Left lung (tissue), 14 donors: ENCODE measurements at regions of chr14 and their contacts with region 1.

Region 1: DNA sequence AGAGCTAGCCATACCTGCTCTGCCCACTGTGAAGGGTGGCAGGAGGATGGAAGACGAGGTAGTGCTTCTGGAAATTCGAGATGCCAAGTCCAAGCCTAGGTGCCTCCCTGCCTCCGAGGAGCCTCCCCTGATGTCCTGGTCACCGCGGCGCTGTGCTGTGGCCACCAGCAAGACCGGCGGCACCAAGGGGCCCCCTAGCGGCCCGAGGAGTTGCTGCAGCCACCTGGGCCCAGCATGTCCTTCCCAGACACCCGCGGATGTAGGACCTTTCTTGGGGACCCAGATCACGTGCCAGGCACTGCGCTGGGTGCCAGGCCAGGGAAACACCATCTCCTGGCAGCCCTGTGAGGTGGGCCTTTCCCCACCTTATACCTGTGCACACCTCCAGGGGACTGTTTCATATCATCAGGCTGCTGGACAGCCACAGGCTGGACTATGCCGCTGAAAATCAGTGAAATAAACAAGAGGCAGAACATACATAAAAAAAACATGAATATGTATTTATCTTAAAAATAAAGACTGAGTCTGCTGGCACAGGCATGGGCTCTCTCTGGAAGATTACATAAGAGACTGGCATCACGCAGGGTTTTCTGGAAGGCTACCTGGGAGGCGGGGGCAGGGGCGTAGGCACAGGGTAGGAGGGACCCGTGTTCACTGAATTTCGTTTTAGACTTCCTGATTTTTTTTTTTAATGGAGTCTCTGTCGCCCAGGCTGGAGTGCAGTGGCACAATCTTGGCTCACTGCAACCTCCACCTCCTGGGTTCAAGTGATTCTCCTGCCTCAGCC is 15.9 kb upstream of the HHIPL1 start:
- DNase-seq: peak; percentile 61 to 91 (median 73)
- ATAC-seq: peak; percentile 99
- H3K4me3 ChIP-seq: no peak overlapping the region
- H3K27ac ChIP-seq: no peak overlapping the region
- H3K4me1 ChIP-seq: peaks cover 0 to 4% of the 10 kb centered on the region in 2 donors
- H3K27me3 ChIP-seq: no peaks in the 10 kb centered on the region
- CTCF ChIP-seq: peak; percentile 97 to 98

Region 2: DNA sequence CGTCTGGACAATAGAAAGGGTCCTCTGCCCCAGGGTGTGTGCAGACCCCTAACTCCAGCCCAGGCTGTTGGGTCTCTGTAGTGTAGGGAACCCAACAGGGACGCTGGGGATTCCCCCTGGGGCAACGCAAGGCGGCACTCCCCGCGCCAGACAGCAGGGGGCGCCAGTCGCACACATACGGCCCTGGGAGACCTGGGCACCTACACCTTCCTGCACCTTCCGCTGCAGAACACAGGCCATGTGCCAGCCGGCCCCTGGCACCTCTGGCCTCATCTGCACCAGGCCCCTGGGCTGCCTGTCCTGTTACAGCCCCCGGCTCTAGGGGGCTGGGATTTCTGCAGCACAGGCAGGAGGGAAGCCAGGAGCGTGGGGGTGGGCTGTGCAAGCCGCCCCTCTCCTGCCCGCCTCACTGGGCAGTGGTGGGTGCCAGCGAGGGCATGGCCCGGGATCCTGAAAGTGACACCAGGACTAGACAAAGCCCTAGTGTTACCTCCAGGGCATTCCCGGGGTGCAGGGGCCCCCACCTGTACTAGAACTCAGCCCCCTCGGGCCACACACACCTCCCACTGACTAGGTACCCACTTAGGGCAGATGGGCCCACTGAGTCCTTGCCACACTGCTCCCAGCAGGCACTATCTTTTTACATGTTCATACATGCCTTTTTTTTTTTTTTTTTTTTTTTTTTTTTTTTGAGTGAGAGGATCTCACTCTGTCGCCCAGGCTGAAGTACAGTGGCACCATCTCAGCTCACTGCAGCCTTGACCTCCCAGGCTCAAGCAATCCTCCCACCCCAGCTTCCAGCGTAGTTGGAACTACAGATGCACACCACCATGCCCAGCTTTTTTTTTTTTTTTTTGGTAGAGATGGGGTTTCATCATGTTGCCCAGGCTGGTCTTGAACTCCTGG is 110.3 kb before region 1 on chr14:
- intact Hi-C with region 1: loop called (anchors 5 to 10 kb)
- DNase-seq: peak; percentile 42 to 92 (median 68)
- ATAC-seq: peak; percentile 88
- H3K4me3 ChIP-seq: no peak overlapping the region
- H3K27ac ChIP-seq: no peak overlapping the region
- H3K4me1 ChIP-seq: peaks cover 0 to 14% of the 10 kb centered on the region in 2 donors
- H3K27me3 ChIP-seq: no peaks in the 10 kb centered on the region
- CTCF ChIP-seq: peak; percentile 97 to 98

Region 3: GRCh38 chr14:99524804-99525698 is 104.0 kb before region 1 on chr14:
- intact Hi-C with region 1: loop called (anchors 5 to 10 kb)
- DNase-seq: peak in 1 of 4 donors; percentile 62
- ATAC-seq: peak; percentile 81
- H3K4me3 ChIP-seq: no peak overlapping the region
- H3K27ac ChIP-seq: peak overlapping the region in 1 of 2 donors; percentile 40
- H3K4me1 ChIP-seq: peaks cover 4 to 34% of the 10 kb centered on the region in 2 donors
- H3K27me3 ChIP-seq: no peaks in the 10 kb centered on the region
- CTCF ChIP-seq: no peak

Region 4: GRCh38 chr14:99563233-99564129 is 65.5 kb before region 1 on chr14:
- intact Hi-C with region 1: loop called in 1 of 2 experiments (anchors 10 kb)
- DNase-seq: peak in 3 of 4 donors; percentile 65 to 91 (median 73)
- ATAC-seq: peak; percentile 92
- H3K4me3 ChIP-seq: no peak overlapping the region
- H3K27ac ChIP-seq: no peak overlapping the region
- H3K4me1 ChIP-seq: peaks cover 11 to 40% of the 10 kb centered on the region in 2 donors
- H3K27me3 ChIP-seq: no peaks in the 10 kb centered on the region
- CTCF ChIP-seq: peak in 1 of 2 donors; percentile 40